Activated B cell treated with CpG ODN at 0.5 μM for 24 hours (primary cell): ENCODE measurements at regions of chr11 and their contacts with region 1.

Region 1: GRCh38 chr11:111932611-111932950 is 4.6 kb upstream of the DIXDC1 start:
- DNase-seq: no peak
- ATAC-seq: no peak
- H3K4me3 Mint-ChIP-seq: no peak overlapping the region
- H3K27ac Mint-ChIP-seq: no peak overlapping the region
- H3K4me1 Mint-ChIP-seq: peaks cover 11% of the 10 kb centered on the region
- H3K27me3 Mint-ChIP-seq: peaks cover 6% of the 10 kb centered on the region
- CTCF ChIP-seq: no peak

Region 2: DNA sequence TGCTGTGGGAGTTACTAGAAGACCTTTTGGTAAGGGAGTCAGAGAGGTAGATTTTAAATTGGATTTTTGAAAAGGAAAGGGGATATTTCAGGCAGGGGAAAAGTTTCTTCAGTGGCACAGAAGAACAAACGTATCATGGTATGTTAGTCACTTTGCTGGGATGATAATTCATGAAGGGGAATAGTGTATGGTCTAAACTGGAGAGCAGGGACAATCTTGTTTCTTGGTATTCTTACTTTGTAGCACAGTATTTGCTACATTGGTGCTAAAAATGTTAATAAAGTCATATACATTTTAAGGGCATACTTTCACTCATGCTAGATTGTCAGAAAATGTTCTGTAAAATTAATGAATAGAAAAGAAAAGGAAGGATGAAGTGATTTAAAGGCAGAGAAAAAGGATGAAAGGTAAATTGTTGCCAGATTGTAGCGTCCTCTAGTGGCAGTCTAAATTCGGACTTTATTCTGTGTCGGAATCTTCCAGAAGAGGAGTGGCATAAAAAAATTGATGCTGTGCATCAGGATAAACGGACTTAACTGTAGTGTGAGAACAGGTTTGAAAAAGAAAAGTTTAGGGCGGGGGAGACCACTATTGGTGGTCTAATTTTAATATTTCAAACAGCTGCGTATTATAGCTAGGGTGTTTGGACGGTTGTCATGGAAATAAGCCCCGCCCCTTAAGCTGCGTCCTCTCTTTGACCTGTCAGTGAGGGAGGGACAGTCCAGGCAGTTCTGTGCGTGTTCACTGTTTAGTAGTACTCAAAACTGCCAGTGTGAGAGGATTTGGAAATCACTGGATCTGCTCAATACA is 242.4 kb after region 1 on chr11 and contains the start of gene BCO2:
- CTCF ChIA-PET with region 1: no interaction called
- POLR2A ChIA-PET with region 1: interaction called, 3 read pairs
- intact Hi-C with region 1: loop called (anchors 2 kb)
- DNase-seq: peak; percentile 18
- ATAC-seq: peak; percentile 74
- H3K4me3 Mint-ChIP-seq: peak within 1 kb of the TSS; percentile 46
- H3K27ac Mint-ChIP-seq: no peak within 1 kb of the TSS
- H3K4me1 Mint-ChIP-seq: peaks cover 23% of the 10 kb centered on the region
- H3K27me3 Mint-ChIP-seq: peaks cover 9% of the 10 kb centered on the region
- CTCF ChIP-seq: no peak
- total RNA-seq, gene BCO2: 1.4 and 3.2 TPM in 2 replicates